ENCODE measurements at regions of chr3 and their contacts with region 1.

Region 1: DNA sequence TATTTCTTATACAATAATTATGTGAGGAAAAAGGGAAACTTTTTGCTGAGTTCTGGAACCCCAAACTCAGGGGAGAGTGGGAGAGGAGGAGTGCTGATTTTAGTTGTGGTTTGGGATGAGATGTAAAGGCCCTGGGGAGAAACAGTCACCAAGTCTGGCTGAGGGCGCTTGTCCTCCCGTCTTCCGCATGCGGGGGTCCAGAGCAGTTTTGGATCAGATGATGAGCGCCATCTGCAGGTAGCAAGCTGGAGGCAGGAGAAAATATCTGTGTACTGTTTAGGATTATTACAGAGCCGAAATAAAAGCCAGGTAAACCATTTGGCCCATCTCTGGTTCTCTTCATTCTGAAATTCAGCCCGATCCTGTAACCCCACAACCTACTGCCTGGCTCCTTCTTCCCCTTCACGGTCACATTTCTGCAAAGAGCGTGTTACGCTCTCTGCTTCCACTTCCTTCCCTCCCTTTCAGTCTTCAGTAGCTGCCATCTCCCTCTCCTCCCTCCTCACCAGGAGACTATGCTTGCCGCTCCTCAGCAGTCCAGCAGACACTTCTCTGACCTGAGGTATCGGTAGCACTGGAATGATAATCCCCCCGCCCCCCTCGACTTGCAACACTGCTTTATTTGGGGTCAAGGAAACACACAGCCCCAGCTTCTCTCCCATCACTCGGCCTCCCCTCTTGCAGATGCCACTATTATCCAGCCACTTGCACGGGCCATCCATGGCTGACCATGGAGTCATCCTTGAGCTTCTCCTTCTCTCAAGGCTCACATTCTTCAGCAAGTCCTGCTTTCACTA is 1.4 kb upstream of the PARP14 start:
- DNase-seq: peak; percentile 25 to 82
- H3K4me3 ChIP-seq: peak overlapping the region in 1 of 4 experiments; percentile 87; a peak in 2 of 8 replicates
- H3K27ac ChIP-seq: no peak overlapping the region
- H3K4me1 ChIP-seq: peaks cover 6 to 12% (median 9%) of the 10 kb centered on the region in 4 experiments; a peak in 6 of 7 replicates
- H3K27me3 ChIP-seq: no peaks in the 10 kb centered on the region; a peak in 2 of 7 replicates
- CTCF ChIP-seq: peak; percentile 68 to 90 (median 84)
- EP300 ChIP-seq: no peak
- POLR2A ChIP-seq: no peak
- RAD21 ChIP-seq: peak; percentile 90 to 93

Region 2: DNA sequence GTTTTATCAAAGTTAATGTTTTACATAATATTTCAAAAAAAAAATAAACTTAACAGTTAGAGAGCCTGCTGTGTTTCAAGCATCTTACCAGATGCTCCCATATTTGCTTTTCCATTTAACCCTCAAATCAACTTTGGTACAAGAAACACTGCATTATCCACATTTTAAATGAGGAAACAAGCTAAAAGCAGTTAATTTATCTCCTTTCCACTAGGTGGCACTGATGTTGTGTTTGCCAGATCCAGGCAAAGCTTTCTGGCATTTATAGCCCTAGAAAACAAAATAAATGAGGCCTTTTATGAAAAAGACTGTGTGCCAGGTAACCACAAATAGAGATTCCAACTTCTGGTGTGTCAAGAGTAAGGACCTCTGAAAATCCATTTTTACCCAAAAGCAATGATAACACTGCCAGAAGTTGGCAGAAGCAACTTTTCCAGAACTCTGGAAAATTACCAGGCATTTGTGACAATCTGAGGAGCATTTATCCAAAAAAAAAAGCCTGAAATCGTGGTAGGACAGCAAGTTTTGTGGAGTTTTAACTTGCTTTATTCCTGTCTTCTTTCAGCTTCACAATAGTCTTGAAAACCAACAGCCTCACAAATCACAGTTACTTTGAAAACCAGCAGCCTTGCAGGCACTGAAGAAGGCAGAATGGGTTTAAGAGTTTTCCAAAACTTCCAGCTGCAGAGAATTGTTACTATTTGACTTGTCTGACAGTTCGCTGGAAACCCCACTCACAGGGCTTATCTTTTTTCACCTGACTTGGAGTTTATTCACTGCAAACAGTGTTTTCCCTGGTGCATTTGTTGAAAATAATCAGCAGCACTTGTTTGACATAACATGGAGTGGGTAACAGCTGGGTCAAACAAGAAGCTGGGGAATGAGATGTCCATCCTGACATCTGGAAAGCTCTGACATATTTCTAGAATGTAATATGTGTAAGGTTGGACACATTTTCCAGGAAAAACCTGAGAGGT is 286.1 kb before region 1 on chr3:
- CTCF ChIA-PET with region 1: interaction called, 44 read pairs
- POLR2A ChIA-PET with region 1: no interaction called
- DNase-seq: no peak
- H3K4me3 ChIP-seq: no peak overlapping the region
- H3K27ac ChIP-seq: no peak overlapping the region
- H3K4me1 ChIP-seq: no peaks in the 10 kb centered on the region
- H3K27me3 ChIP-seq: no peaks in the 10 kb centered on the region
- CTCF ChIP-seq: peak in 2 of 3 experiments; percentile 54 to 64; a peak in 2 of 4 replicates
- EP300 ChIP-seq: no peak
- POLR2A ChIP-seq: no peak
- RAD21 ChIP-seq: peak; percentile 73 to 78

Region 3: GRCh38 chr3:122560680-122561079 is 118.6 kb before region 1 on chr3:
- CTCF ChIA-PET with region 1: interaction called, 62 read pairs
- POLR2A ChIA-PET with region 1: no interaction called
- DNase-seq: no peak
- H3K4me3 ChIP-seq: no peak overlapping the region
- H3K27ac ChIP-seq: no peak overlapping the region
- H3K4me1 ChIP-seq: peaks cover 4 to 5% (median 5%) of the 10 kb centered on the region in 4 experiments; a peak in 6 of 7 replicates
- H3K27me3 ChIP-seq: peaks cover 0 to 2% (median 0%) of the 10 kb centered on the region in 4 experiments; a peak in 2 of 7 replicates
- CTCF ChIP-seq: peak in 2 of 3 experiments; percentile 56 to 58; a peak in 3 of 4 replicates
- EP300 ChIP-seq: no peak
- POLR2A ChIP-seq: no peak
- RAD21 ChIP-seq: peak; percentile 74 to 78

Region 4: GRCh38 chr3:122628569-122628968 is 50.7 kb before region 1 on chr3:
- CTCF ChIA-PET with region 1: interaction called, 18 read pairs
- POLR2A ChIA-PET with region 1: no interaction called
- DNase-seq: no peak
- H3K4me3 ChIP-seq: no peak overlapping the region
- H3K27ac ChIP-seq: no peak overlapping the region
- H3K4me1 ChIP-seq: no peaks in the 10 kb centered on the region
- H3K27me3 ChIP-seq: no peaks in the 10 kb centered on the region
- CTCF ChIP-seq: no peak
- EP300 ChIP-seq: no peak
- POLR2A ChIP-seq: no peak
- RAD21 ChIP-seq: no peak

Region 5: DNA sequence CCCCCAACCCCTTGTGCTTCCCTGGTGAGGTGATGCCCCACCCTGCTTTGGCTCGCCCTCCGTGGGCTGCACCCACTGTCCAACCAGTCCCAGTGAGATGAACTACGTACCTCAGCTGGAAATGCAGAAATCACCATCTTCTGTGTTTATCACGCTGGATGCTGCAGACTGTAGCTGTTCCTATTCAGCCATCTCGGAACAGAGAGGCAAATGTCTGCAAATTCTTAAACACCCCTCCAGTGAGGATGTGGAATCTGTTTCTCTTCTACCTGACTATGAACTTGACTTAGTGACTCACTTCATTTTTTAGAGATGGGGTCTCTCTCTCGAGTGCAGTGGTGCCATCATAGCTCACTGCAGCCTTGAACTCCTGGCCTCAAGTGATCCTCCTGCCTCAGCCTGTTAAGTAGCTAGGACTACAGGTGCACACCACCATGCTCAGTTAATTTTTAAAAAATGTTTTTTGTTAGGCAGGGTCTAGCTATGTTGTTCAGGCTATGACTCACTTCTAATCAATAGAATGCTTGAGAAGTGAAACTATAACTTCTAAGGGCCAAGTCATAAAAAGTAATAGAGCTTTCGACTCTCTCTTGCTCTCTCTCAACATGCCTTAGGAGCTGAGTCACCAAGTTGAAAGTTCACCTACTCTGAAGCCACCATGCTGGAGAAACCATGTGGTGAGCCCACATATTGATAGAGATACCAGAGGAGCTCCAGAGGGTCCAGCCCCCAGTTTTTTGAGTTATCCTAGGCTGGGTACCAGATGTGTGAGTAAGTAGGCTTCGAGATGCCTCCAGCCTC is 10.2 kb before region 1 on chr3:
- CTCF ChIA-PET with region 1: interaction called, 18 read pairs
- POLR2A ChIA-PET with region 1: no interaction called
- DNase-seq: no peak
- H3K4me3 ChIP-seq: no peak overlapping the region
- H3K27ac ChIP-seq: no peak overlapping the region
- H3K4me1 ChIP-seq: no peaks in the 10 kb centered on the region
- H3K27me3 ChIP-seq: no peaks in the 10 kb centered on the region
- CTCF ChIP-seq: no peak
- EP300 ChIP-seq: no peak
- POLR2A ChIP-seq: no peak
- RAD21 ChIP-seq: no peak